ENCODE measurements at regions of chrX and their contacts with region 1.

Region 1: GRCh38 chrX:53969540-53969939 is 74.7 kb downstream of the PHF8 start:
- DNase-seq: no peak
- H3K4me3 ChIP-seq: no peak overlapping the region
- H3K27ac ChIP-seq: no peak overlapping the region
- H3K4me1 ChIP-seq: no peaks in the 10 kb centered on the region
- H3K27me3 ChIP-seq: no peaks in the 10 kb centered on the region
- CTCF ChIP-seq: no peak

Region 2: GRCh38 chrX:53900623-53901022 is 68.9 kb before region 1 on chrX:
- CTCF ChIA-PET with region 1: no interaction called
- POLR2A ChIA-PET with region 1: interaction called, 46 read pairs
- intact Hi-C with region 1: no loop called
- DNase-seq: no peak
- H3K4me3 ChIP-seq: no peak overlapping the region
- H3K27ac ChIP-seq: no peak overlapping the region
- H3K4me1 ChIP-seq: no peaks in the 10 kb centered on the region
- H3K27me3 ChIP-seq: no peaks in the 10 kb centered on the region
- CTCF ChIP-seq: no peak

Region 3: DNA sequence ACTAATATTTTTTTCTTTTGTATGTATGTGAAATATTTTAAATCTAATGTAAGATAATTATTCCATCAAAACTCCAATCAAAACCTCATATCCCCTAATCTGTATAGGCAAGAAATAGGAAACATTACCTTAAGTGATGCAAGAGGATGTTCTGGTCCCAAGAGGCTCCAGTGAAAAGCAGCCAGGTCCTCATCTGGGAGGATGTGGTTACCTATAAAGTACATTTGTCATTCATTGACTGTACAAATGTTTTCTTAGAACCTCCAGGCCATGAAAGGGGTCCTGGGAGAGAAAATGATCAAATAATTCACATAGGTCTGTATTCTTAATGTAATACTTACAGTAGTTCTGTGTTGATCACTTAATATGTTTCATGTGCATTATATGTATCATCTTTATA is 188.0 kb after region 1 on chrX:
- CTCF ChIA-PET with region 1: no interaction called
- POLR2A ChIA-PET with region 1: interaction called, 11 read pairs
- intact Hi-C with region 1: no loop called
- DNase-seq: no peak
- H3K4me3 ChIP-seq: no peak overlapping the region
- H3K27ac ChIP-seq: no peak overlapping the region
- H3K4me1 ChIP-seq: no peaks in the 10 kb centered on the region
- H3K27me3 ChIP-seq: no peaks in the 10 kb centered on the region
- CTCF ChIP-seq: no peak

Measured in PC-9 (cell line).